CD8-positive, alpha-beta T cell (primary cell): ENCODE measurements at regions of chr5 and their contacts with region 1.

Region 1: DNA sequence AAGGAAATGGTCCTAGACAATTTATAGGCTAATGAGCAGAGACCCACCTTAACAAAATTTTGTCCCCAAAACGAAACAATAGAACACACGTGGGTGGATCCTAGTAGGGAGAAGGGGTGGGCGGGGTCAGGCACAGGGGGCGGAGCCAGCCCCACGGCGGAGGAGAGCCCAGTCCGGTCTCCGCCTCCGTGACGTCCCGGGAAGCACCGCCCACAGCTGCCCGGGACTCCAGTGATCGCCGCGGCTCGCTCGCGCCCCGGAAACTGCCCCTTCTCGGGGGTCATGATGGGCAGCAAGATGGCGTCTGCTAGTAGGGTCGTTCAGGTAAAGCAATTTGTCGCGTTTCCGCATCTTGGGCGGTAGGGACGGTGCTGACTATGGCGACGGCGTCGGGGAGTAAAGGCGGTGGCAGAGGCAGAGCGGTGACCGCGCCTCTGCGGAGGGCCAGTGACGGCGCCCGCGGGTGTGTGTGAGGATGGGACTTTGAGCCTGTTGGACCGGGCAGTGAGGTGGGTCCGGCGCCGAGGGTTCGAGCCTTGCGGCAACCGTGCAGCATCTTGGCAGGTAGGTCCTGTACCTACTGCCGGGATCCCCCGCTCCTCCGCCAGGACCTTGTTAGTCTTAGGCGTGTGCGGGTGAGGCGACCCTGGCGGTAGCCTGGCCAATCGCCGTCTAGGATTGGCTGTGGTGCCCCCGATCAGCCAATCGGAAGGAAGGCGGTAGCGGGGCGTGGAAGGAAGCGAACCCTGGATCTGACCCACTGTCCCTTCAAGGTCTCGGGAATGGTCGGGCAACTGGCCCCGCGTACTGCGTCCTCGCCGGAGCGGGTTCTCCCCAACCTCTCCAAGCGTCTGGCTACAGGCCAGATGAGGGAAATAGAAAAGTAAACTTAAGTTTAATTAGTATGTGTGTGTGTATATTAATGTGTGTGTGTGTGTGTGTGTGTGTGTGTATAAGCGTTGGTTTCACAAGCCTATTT is 16.8 kb upstream of the CDK7 start:
- DNase-seq: peak; percentile 90 to 97 (median 94)
- ATAC-seq: peak; percentile 92
- H3K4me3 ChIP-seq: peak overlapping the region; percentile 85 to 97
- H3K4me3 Mint-ChIP-seq: peak overlapping the region; percentile 100
- H3K27ac ChIP-seq: peak overlapping the region; percentile 91 to 95
- H3K27ac Mint-ChIP-seq: peak overlapping the region; percentile 99
- H3K4me1 ChIP-seq: peaks cover 15% of the 10 kb centered on the region
- H3K4me1 Mint-ChIP-seq: peaks cover 28% of the 10 kb centered on the region
- H3K27me3 ChIP-seq: no peaks in the 10 kb centered on the region
- H3K27me3 Mint-ChIP-seq: no peaks in the 10 kb centered on the region
- CTCF ChIP-seq: no peak

Region 2: DNA sequence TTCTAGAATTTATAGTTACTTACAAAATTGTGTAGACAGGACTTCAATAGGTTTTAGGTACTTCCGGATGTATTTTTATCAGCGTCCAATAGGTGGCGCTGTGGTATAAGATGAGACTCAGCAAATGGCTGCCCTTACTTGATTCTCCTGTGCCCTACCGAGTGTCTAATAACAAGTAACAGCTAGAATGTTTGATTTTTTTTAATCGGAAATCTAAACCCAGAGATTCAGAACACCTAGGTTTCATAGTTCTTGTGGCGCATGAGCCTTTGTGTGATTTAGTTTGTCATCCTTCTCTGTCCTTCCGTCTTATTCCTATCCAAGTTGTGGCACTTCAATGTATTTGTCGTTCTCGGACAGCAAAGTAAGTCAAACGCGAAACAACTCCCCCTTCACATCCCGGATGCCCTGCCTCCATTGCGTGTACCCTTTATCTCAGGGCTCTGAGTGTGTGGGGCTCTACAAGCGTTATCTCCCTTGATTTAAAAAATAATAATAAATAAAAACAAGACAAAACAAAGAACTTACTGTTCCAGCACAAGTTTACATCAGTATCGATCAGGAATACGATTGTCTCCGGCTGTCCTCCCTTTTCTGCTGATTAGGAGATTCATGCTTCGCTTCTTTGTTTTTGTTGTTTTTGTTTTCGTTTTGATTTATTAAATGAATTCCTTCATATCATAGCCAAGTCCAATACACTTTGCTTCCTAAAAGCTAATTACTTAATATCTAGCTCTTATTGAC is 174.8 kb before region 1 on chr5:
- CTCF ChIA-PET with region 1: no interaction called
- POLR2A ChIA-PET with region 1: no interaction called
- intact Hi-C with region 1: loop called in 1 of 2 experiments (anchors 5 kb)
- DNase-seq: peak; percentile 50 to 95 (median 78)
- ATAC-seq: peak; percentile 97
- H3K4me3 ChIP-seq: peak overlapping the region; percentile 54 to 64
- H3K4me3 Mint-ChIP-seq: peak overlapping the region; percentile 89
- H3K27ac ChIP-seq: peak overlapping the region; percentile 69 to 81
- H3K27ac Mint-ChIP-seq: peak overlapping the region; percentile 95
- H3K4me1 ChIP-seq: peaks cover 3% of the 10 kb centered on the region
- H3K4me1 Mint-ChIP-seq: peaks cover 11% of the 10 kb centered on the region
- H3K27me3 ChIP-seq: no peaks in the 10 kb centered on the region
- H3K27me3 Mint-ChIP-seq: no peaks in the 10 kb centered on the region
- CTCF ChIP-seq: peak; percentile 88

Region 3: GRCh38 chr5:69166686-69167492 is 50.9 kb before region 1 on chr5 and contains the start of gene CCNB1:
- CTCF ChIA-PET with region 1: no interaction called
- POLR2A ChIA-PET with region 1: no interaction called
- intact Hi-C with region 1: loop called (anchors 1 to 5 kb)
- DNase-seq: peak; percentile 93 to 98 (median 96)
- ATAC-seq: peak; percentile 100
- H3K4me3 ChIP-seq: peak within 1 kb of the TSS; percentile 84 to 87
- H3K4me3 Mint-ChIP-seq: peak within 1 kb of the TSS; percentile 94
- H3K27ac ChIP-seq: peak within 1 kb of the TSS; percentile 50 to 61
- H3K27ac Mint-ChIP-seq: peak within 1 kb of the TSS; percentile 84
- H3K4me1 ChIP-seq: peaks cover 9% of the 10 kb centered on the region
- H3K4me1 Mint-ChIP-seq: peaks cover 27% of the 10 kb centered on the region
- H3K27me3 ChIP-seq: no peaks in the 10 kb centered on the region
- H3K27me3 Mint-ChIP-seq: no peaks in the 10 kb centered on the region
- CTCF ChIP-seq: no peak
- total RNA-seq, gene CCNB1: 0.75 to 0.95 TPM

Region 4: DNA sequence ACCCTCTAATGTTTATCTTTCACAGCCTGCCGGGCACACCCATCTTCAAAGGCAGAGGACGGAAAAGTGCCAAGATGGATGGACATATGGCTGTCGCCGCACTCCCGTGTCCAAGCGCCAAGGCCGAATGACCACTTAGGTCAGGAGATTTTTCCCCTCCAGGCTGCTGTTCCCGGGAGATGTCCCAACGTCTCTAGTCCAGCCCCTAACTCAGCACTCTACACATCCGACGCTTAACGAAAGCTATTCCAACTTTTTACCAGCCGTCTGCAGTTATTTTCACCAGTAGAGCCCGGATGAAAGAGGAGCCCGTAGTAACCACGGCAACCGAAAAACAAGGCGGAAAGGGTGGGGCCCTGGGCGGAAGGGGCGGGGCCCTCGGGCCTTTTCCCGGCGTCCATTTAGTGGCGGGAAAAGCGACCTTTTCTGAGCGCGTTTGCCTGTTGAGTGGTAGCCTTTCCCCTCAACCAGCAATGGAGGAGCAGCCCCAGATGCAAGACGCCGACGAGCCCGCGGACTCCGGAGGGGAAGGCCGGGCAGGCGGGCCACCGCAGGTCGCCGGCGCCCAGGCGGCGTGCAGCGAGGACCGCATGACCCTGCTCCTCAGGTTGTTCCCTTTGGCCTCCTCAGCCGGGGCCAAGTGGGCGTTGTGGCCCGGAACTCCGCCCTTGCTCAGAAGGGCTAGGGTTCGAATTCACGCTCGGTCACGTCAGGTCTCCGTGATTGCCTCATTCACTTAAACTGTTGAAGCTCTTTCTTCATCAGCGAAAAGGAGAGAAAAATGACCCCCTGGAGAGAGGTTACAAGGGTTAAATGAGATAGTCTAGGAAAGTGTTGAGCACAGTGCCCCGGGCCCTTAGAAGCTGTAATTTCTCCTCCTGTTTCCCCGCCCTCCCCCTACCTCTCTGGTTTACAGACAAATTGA is 28.4 kb before region 1 on chr5 and contains the start of gene CENPH:
- CTCF ChIA-PET with region 1: no interaction called
- POLR2A ChIA-PET with region 1: interaction called, 3 read pairs
- intact Hi-C with region 1: loop called (anchors 1 kb)
- DNase-seq: peak; percentile 82 to 93 (median 90)
- ATAC-seq: peak; percentile 94
- H3K4me3 ChIP-seq: peak within 1 kb of the TSS; percentile 75 to 77
- H3K4me3 Mint-ChIP-seq: peak within 1 kb of the TSS; percentile 91
- H3K27ac ChIP-seq: peak within 1 kb of the TSS; percentile 66 to 73
- H3K27ac Mint-ChIP-seq: peak within 1 kb of the TSS; percentile 84
- H3K4me1 ChIP-seq: peaks cover 10% of the 10 kb centered on the region
- H3K4me1 Mint-ChIP-seq: peaks cover 16% of the 10 kb centered on the region
- H3K27me3 ChIP-seq: no peaks in the 10 kb centered on the region
- H3K27me3 Mint-ChIP-seq: no peaks in the 10 kb centered on the region
- CTCF ChIP-seq: no peak
- total RNA-seq, gene CENPH: 4.1 to 4.6 TPM